ENCODE measurements at regions of chr3 and their contacts with region 1.

Region 1: GRCh38 chr3:71006810-71007785 is 576.4 kb downstream of the FOXP1 start:
- DNase-seq: peak; percentile 69
- ATAC-seq: peak; percentile 60
- H3K4me3 ChIP-seq: no peak overlapping the region
- H3K27ac ChIP-seq: peak overlapping the region; percentile 35
- H3K4me1 ChIP-seq: peaks cover 23% of the 10 kb centered on the region
- H3K27me3 ChIP-seq: no peaks in the 10 kb centered on the region
- CTCF ChIP-seq: peak; percentile 82

Region 2: GRCh38 chr3:70606018-70606417 is 401.1 kb before region 1 on chr3:
- CTCF ChIA-PET with region 1: no interaction called
- POLR2A ChIA-PET with region 1: interaction called, 27 read pairs
- intact Hi-C with region 1: no loop called
- DNase-seq: no peak
- ATAC-seq: no peak
- H3K4me3 ChIP-seq: no peak overlapping the region
- H3K27ac ChIP-seq: no peak overlapping the region
- H3K4me1 ChIP-seq: no peaks in the 10 kb centered on the region
- H3K27me3 ChIP-seq: no peaks in the 10 kb centered on the region
- CTCF ChIP-seq: no peak

Region 3: GRCh38 chr3:70989174-70989573 is 17.9 kb before region 1 on chr3:
- CTCF ChIA-PET with region 1: no interaction called
- POLR2A ChIA-PET with region 1: no interaction called
- intact Hi-C with region 1: no loop called
- DNase-seq: no peak
- ATAC-seq: no peak
- H3K4me3 ChIP-seq: no peak overlapping the region
- H3K27ac ChIP-seq: no peak overlapping the region
- H3K4me1 ChIP-seq: peaks cover 2% of the 10 kb centered on the region
- H3K27me3 ChIP-seq: no peaks in the 10 kb centered on the region
- CTCF ChIP-seq: no peak

Region 4: GRCh38 chr3:71069797-71070196 is 62.7 kb after region 1 on chr3:
- CTCF ChIA-PET with region 1: interaction called, 3 read pairs
- POLR2A ChIA-PET with region 1: no interaction called
- intact Hi-C with region 1: loop called (anchors 1 kb)
- DNase-seq: peak; percentile 86
- ATAC-seq: peak; percentile 30
- H3K4me3 ChIP-seq: no peak overlapping the region
- H3K27ac ChIP-seq: no peak overlapping the region
- H3K4me1 ChIP-seq: peaks cover 40% of the 10 kb centered on the region
- H3K27me3 ChIP-seq: no peaks in the 10 kb centered on the region
- CTCF ChIP-seq: peak; percentile 93

Region 5: DNA sequence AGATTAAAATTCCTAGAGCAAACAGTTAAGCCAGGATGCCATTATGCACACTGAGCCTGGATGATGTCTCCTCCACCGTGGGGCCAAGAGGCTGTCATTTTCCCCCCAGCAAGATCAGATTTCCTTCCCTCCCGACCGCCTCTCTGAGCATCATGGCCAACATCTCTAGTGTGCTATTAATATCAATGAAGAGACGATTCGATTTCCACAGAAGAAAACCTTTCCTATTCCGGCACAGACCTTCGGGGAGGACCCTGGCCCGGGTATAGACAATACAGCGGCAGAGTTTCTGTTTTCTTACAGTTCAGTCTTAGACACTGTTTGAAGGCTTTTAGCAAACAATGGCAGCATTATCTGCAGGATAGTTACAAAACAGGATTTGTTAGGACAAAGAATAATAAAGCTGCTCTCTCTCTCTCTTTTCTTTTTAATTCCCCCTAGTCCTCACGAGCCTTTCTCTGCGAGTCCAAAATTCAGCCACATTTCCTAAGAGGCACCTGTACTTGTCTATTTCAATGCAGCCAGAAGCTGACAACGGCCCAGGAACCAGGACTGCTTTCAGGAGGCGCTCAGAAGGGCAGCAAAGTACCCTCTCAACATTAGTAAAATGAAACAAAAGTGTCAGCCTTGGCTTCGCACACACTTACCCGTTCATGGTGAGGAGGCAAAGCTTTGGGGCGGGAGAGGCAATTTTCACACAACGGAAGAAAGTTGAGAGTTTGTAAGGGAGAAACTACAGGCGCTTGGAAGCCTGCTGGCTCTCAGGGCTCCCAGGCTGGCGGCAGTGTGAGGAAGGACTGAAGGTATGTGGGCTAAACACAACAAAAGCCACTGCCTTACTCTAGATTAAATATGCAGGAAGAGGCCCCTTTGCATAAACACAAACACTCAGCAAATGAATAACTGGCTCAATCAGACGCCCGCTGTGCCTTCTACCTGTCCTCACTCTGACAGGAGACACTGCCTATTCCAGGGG is 298.4 kb after region 1 on chr3:
- CTCF ChIA-PET with region 1: no interaction called
- POLR2A ChIA-PET with region 1: no interaction called
- intact Hi-C with region 1: loop called (anchors 1 kb)
- DNase-seq: peak; percentile 38
- ATAC-seq: peak; percentile 65
- H3K4me3 ChIP-seq: peak overlapping the region; percentile 57
- H3K27ac ChIP-seq: no peak overlapping the region
- H3K4me1 ChIP-seq: peaks cover 24% of the 10 kb centered on the region
- H3K27me3 ChIP-seq: no peaks in the 10 kb centered on the region
- CTCF ChIP-seq: no peak

Region 6: GRCh38 chr3:71397046-71397445 is 389.9 kb after region 1 on chr3:
- CTCF ChIA-PET with region 1: no interaction called
- POLR2A ChIA-PET with region 1: no interaction called
- intact Hi-C with region 1: no loop called
- DNase-seq: peak; percentile 65
- ATAC-seq: peak; percentile 46
- H3K4me3 ChIP-seq: no peak overlapping the region
- H3K27ac ChIP-seq: no peak overlapping the region
- H3K4me1 ChIP-seq: peaks cover 10% of the 10 kb centered on the region; the same call in 1 of the 2 replicates
- H3K27me3 ChIP-seq: no peaks in the 10 kb centered on the region
- CTCF ChIP-seq: peak; percentile 56

Region 7: GRCh38 chr3:71659864-71660591 is 652.9 kb after region 1 on chr3:
- CTCF ChIA-PET with region 1: no interaction called
- POLR2A ChIA-PET with region 1: no interaction called
- intact Hi-C with region 1: no loop called
- DNase-seq: no peak
- ATAC-seq: no peak
- H3K4me3 ChIP-seq: no peak overlapping the region
- H3K27ac ChIP-seq: no peak overlapping the region
- H3K4me1 ChIP-seq: peaks cover 12% of the 10 kb centered on the region
- H3K27me3 ChIP-seq: no peaks in the 10 kb centered on the region
- CTCF ChIP-seq: no peak

Measured in PC-3 (cell line).